B cell (primary cell): ENCODE measurements at regions of chr3 and their contacts with region 1.

Region 1: GRCh38 chr3:46378426-46378942 is 7.7 kb downstream of the CCR5 start:
- DNase-seq: peak; percentile 64
- ATAC-seq: peak; percentile 51
- H3K4me3 ChIP-seq: no peak overlapping the region
- H3K4me3 Mint-ChIP-seq: no peak overlapping the region
- H3K27ac ChIP-seq: no peak overlapping the region
- H3K27ac Mint-ChIP-seq: peak overlapping the region; percentile 5
- H3K4me1 ChIP-seq: peaks cover 24 to 30% of the 10 kb centered on the region in 2 donors
- H3K4me1 Mint-ChIP-seq: peaks cover 41% of the 10 kb centered on the region
- H3K27me3 ChIP-seq: peaks cover 0 to 2% (median 0%) of the 10 kb centered on the region in 4 experiments
- H3K27me3 Mint-ChIP-seq: peaks cover 3% of the 10 kb centered on the region
- CTCF ChIP-seq: peak; percentile 72

Region 2: DNA sequence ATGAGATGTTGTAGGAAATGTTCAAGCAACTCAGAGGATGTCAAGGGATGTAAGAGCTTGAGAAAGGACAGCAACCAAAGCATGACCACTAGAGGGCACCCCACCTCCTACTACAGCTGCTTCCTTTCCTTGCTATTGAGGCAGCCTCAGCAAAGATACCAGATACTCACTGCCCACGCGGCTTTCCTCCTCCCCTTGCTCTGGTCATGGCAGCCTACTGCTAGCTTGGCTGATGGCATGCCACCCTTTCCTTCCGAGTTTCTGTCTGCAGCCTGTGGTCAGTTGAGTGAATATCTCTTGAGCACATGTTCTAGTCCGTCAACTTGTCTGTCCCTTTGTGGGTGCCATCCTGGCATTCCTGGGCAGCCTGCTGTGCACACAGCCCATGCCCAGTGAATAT is 439.6 kb before region 1 on chr3:
- CTCF ChIA-PET with region 1: interaction called, 60 read pairs
- POLR2A ChIA-PET with region 1: no interaction called
- intact Hi-C with region 1: loop called (anchors 1 kb)
- DNase-seq: peak; percentile 86
- ATAC-seq: peak; percentile 79
- H3K4me3 ChIP-seq: no peak overlapping the region
- H3K4me3 Mint-ChIP-seq: no peak overlapping the region
- H3K27ac ChIP-seq: no peak overlapping the region
- H3K27ac Mint-ChIP-seq: no peak overlapping the region
- H3K4me1 ChIP-seq: peaks cover 0 to 5% of the 10 kb centered on the region in 2 donors
- H3K4me1 Mint-ChIP-seq: no peaks in the 10 kb centered on the region
- H3K27me3 ChIP-seq: no peaks in the 10 kb centered on the region
- H3K27me3 Mint-ChIP-seq: no peaks in the 10 kb centered on the region
- CTCF ChIP-seq: peak; percentile 86

Region 3: DNA sequence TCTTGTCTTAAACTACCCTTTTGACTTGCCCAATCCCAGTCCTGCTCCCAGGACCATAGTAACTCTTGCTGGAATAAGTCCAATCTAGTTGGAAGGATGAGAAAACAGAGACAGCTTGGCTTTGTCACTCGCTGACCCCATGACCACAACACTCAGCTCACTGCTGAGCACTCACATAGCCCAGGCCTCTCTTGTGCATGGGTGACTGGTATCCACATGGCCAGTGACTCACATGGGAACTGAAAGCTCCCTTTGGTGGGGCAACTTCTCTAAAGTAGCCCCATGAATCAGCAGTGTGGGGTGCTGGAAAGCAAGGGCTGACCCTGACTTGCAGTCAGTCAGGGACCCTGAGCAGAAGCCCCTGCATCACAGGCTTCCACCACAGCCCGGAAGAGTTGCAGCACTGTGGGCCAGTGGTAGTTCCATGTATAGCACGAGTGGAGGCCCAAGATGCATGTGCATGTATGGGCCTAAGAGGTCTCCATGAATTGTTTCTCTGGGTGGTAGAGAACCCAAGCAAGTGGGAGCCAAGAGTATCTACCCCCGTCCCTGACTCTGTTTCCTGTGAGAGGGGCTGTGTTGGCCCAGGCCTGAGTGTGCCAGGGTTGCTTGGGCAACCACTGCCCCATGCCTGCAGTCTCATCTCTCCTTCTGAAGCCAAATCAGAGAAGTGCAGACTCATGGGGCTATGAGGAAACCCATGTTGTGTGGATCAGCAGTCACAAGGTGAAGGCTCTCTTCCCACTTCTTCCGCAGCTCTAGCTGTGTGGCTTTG is 289.1 kb before region 1 on chr3:
- CTCF ChIA-PET with region 1: interaction called, 233 read pairs
- POLR2A ChIA-PET with region 1: no interaction called
- intact Hi-C with region 1: no loop called
- DNase-seq: peak; percentile 52
- ATAC-seq: peak; percentile 66
- H3K4me3 ChIP-seq: no peak overlapping the region
- H3K4me3 Mint-ChIP-seq: no peak overlapping the region
- H3K27ac ChIP-seq: no peak overlapping the region
- H3K27ac Mint-ChIP-seq: peak overlapping the region; percentile 29
- H3K4me1 ChIP-seq: peaks cover 50 to 58% of the 10 kb centered on the region in 2 donors
- H3K4me1 Mint-ChIP-seq: peaks cover 59% of the 10 kb centered on the region
- H3K27me3 ChIP-seq: no peaks in the 10 kb centered on the region
- H3K27me3 Mint-ChIP-seq: no peaks in the 10 kb centered on the region
- CTCF ChIP-seq: no peak

Region 4: GRCh38 chr3:46495901-46496456 is 117.5 kb after region 1 on chr3:
- CTCF ChIA-PET with region 1: no interaction called
- POLR2A ChIA-PET with region 1: no interaction called
- intact Hi-C with region 1: no loop called
- DNase-seq: no peak
- ATAC-seq: no peak
- H3K4me3 ChIP-seq: no peak overlapping the region
- H3K4me3 Mint-ChIP-seq: no peak overlapping the region
- H3K27ac ChIP-seq: no peak overlapping the region
- H3K27ac Mint-ChIP-seq: no peak overlapping the region
- H3K4me1 ChIP-seq: peaks cover 15 to 16% of the 10 kb centered on the region in 2 donors
- H3K4me1 Mint-ChIP-seq: peaks cover 27% of the 10 kb centered on the region
- H3K27me3 ChIP-seq: no peaks in the 10 kb centered on the region
- H3K27me3 Mint-ChIP-seq: no peaks in the 10 kb centered on the region
- CTCF ChIP-seq: no peak